ENCODE measurements at regions of chr6 and their contacts with region 1.

Region 1: DNA sequence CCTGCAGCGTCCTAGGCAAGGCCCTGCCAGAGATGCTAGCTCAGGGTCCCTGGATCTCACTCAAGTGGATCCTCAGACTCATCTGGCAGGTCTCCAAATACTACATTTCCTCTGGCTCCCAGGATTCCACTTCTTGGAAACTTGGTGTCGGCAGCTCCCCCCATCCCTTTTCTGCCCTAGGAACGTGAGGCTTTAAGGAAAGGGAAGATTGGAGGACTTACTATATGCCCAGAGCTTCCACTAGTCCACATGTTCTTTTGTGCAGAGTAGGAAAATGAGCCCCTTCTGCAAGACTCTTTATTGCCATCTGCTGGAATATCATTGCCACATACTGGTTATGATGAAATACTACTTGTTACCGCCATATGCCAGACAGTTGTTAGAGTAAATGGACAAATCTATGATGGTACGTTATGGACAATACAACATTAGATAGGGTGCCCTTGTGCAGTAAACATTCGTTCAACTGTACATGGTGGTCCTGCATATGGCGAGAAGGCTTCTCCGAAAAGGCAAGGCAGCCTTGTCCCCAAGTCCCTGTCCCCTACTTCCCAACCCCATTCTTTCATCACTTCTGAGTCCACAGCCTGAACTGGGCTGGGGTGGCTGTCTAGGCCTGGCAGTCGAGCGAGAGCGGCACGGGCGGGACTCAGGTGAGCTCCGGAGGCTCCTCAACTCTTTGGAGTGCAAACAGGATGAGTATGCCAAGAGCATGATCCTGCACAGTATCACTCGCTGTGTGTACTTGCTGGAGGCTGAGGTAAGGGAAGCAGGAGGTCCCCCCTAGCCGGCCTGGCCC is 780 bp downstream of the ARMC12 start:
- H3K4me3 Mint-ChIP-seq: no peak overlapping the region
- H3K27ac Mint-ChIP-seq: no peak overlapping the region
- H3K4me1 Mint-ChIP-seq: peaks cover 31% of the 10 kb centered on the region
- H3K27me3 Mint-ChIP-seq: no peaks in the 10 kb centered on the region

Region 2: GRCh38 chr6:35583893-35584688 is 153.5 kb before region 1 on chr6:
- intact Hi-C with region 1: loop called (anchors 1 kb)
- H3K4me3 Mint-ChIP-seq: no peak overlapping the region
- H3K27ac Mint-ChIP-seq: no peak overlapping the region
- H3K4me1 Mint-ChIP-seq: peaks cover 15% of the 10 kb centered on the region
- H3K27me3 Mint-ChIP-seq: no peaks in the 10 kb centered on the region